Common myeloid progenitor, CD34-positive (primary cell): ENCODE measurements at regions of chr5 and their contacts with region 1.

Region 1: GRCh38 chr5:32709781-32710549 is 1.2 kb upstream of the NPR3 start:
- DNase-seq: peak; percentile 92 to 95 (median 95)
- H3K4me3 ChIP-seq: peak overlapping the region; percentile 78 to 98 (median 85)
- H3K27ac ChIP-seq: peak overlapping the region in 1 of 2 experiments; percentile 68
- H3K4me1 ChIP-seq: peaks cover 10 to 57% (median 28%) of the 10 kb centered on the region in 4 experiments
- H3K27me3 ChIP-seq: no peaks in the 10 kb centered on the region

Region 2: GRCh38 chr5:32677023-32677422 is 32.9 kb before region 1 on chr5:
- CTCF ChIA-PET with region 1: no interaction called
- POLR2A ChIA-PET with region 1: no interaction called
- DNase-seq: no peak
- H3K4me3 ChIP-seq: no peak overlapping the region
- H3K27ac ChIP-seq: no peak overlapping the region
- H3K4me1 ChIP-seq: peaks cover 0 to 6% (median 3%) of the 10 kb centered on the region in 4 experiments
- H3K27me3 ChIP-seq: no peaks in the 10 kb centered on the region

Region 3: DNA sequence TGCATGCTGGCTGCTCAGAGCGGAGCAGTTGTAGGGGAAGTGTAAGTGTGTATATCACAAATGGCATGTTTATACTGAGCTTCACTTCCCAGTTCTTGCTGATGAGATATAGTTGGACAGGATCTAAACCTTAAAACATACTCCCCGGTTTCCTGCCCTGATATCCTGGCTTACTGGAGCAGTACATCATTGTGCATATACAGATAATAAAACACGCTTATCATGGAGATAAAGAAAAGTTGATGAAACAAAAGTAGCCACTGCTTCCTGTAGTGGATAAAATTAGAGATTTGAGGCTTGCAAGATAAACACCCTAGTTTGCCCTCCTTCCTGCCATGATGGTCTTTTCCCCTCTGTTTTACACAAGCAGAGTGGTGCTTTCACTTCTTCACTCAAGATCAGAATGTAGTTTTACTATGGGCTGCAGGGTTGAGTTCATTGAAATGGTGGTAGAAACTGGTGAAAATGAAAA is 16.2 kb after region 1 on chr5:
- CTCF ChIA-PET with region 1: interaction called, 36 read pairs
- POLR2A ChIA-PET with region 1: interaction called, 3 read pairs
- DNase-seq: peak; percentile 45 to 85 (median 76)
- H3K4me3 ChIP-seq: peak overlapping the region in 5 of 7 experiments; percentile 8 to 61 (median 37)
- H3K27ac ChIP-seq: peak overlapping the region; percentile 20 to 63
- H3K4me1 ChIP-seq: peaks cover 27 to 76% (median 55%) of the 10 kb centered on the region in 4 experiments
- H3K27me3 ChIP-seq: no peaks in the 10 kb centered on the region

Region 4: DNA sequence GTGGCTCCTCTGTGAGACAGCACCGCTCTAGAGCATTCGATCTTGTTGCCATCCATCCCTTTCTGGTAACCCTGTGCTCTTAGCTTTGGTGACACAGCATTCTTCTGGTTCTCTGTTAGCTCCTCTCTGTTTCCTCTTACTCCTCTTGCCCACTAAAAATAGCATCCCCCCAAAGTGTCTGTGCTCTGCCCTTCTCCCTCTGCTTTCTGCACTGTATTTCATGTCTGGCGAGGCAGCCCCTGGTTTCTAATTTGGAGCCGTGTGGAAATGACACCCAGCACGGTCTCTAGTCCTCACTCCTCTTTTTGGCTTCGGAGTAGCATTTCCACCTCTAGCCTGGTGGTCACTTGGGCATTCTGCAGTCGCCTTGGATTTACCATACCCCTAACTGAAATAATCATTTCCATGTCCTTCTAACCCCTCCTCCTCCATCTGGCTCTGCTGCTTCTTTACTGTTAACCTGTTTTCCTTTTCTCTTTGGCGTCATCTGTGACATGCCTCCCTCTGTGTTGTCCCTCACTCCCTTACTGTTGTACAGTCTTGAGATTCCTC is 24.9 kb after region 1 on chr5:
- CTCF ChIA-PET with region 1: interaction called, 25 read pairs
- POLR2A ChIA-PET with region 1: interaction called, 5 read pairs
- DNase-seq: peak in 2 of 3 donors; percentile 64 to 77
- H3K4me3 ChIP-seq: peak overlapping the region in 5 of 7 experiments; percentile 20 to 62 (median 58)
- H3K27ac ChIP-seq: peak overlapping the region; percentile 30 to 65
- H3K4me1 ChIP-seq: peaks cover 34 to 70% (median 52%) of the 10 kb centered on the region in 4 experiments
- H3K27me3 ChIP-seq: no peaks in the 10 kb centered on the region

Region 5: DNA sequence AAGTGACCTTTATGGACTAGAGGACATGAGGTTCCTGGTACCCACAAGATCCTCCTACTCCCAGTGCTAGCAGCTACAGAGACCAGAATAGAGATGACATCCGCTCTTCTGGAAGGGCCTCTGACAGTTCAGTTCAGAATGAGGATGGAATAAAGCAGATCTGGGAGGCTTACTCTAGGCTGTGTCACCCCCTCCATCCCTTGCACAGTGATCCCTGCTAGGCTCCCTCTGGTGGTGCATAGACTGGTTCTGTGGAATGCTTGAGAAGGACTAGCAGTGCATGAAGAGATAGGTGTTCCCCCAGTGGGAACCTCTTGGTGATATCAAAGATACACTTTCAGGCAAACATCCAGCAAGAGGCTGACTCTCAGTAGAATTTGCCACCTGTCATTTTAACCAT is 84.1 kb after region 1 on chr5:
- CTCF ChIA-PET with region 1: interaction called, 13 read pairs
- POLR2A ChIA-PET with region 1: no interaction called
- DNase-seq: peak; percentile 31 to 59 (median 53)
- H3K4me3 ChIP-seq: no peak overlapping the region
- H3K27ac ChIP-seq: no peak overlapping the region
- H3K4me1 ChIP-seq: peaks cover 0 to 13% (median 3%) of the 10 kb centered on the region in 4 experiments
- H3K27me3 ChIP-seq: no peaks in the 10 kb centered on the region

Region 6: DNA sequence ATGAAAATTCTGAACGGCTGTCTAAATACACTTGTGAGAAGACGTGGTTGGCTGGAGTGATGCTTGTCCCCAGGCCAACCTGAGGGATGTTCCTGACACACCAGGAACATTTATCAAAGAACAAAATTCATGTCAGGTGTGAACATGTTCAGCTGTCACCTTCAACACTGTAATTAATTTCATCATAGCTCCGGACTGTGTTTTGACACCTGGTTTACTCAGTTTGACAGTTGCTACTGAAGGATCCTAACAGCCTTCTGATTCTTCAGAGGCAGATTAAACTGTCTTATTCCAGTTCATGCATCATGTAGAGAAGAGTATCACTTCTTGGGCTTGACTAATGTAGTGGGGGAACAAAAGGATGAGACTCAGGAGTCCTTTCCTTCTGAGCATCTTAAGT is 135.2 kb after region 1 on chr5:
- CTCF ChIA-PET with region 1: interaction called, 59 read pairs
- POLR2A ChIA-PET with region 1: no interaction called
- DNase-seq: no peak
- H3K4me3 ChIP-seq: no peak overlapping the region
- H3K27ac ChIP-seq: no peak overlapping the region
- H3K4me1 ChIP-seq: peaks cover 15 to 81% (median 36%) of the 10 kb centered on the region in 4 experiments
- H3K27me3 ChIP-seq: no peaks in the 10 kb centered on the region

Region 7: DNA sequence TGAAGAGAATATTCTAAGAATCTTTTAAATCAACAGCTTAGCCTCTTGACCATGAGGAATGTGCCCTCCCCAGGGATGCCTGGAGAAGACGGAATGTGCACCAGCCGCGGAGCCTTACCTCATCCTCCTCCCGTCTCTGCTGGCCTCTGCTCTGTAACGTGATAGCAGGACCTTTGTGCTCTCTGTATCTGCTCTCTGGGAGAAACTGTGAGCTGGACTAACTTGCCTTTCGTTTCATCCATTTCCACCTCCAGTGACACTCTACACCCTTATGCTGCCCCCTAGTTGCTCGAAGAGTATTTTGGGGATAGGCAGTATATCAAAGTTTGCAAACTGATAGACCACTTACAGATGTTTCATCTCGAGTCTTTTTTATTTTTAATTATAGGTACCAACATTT is 142.6 kb after region 1 on chr5:
- CTCF ChIA-PET with region 1: interaction called, 59 read pairs
- POLR2A ChIA-PET with region 1: no interaction called
- DNase-seq: peak; percentile 64 to 77 (median 75)
- H3K4me3 ChIP-seq: peak overlapping the region in 4 of 7 experiments; percentile 25 to 68 (median 38)
- H3K27ac ChIP-seq: no peak overlapping the region
- H3K4me1 ChIP-seq: peaks cover 0 to 25% (median 6%) of the 10 kb centered on the region in 4 experiments
- H3K27me3 ChIP-seq: no peaks in the 10 kb centered on the region

Region 8: DNA sequence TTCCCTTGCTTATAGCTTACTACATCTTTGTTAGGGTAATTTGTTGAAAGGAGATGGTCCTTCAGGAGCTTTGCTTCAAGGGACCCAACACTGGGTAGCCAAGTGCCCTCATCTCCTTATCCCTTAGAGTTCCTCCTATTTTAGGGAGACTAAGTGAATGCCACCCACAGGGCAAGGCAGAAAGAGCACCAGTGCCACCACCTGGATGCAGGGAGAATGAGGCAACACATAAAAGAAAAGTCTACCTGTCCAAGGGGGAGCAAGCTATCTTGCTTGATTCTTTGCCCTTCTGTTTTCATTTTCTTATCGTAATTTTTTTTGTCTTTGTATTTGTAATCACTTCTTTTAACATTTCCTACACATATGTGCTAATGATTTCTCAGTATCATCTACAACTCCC is 206.7 kb after region 1 on chr5:
- CTCF ChIA-PET with region 1: interaction called, 10 read pairs
- POLR2A ChIA-PET with region 1: interaction called, 3 read pairs
- DNase-seq: peak; percentile 49 to 64 (median 55)
- H3K4me3 ChIP-seq: no peak overlapping the region
- H3K27ac ChIP-seq: no peak overlapping the region
- H3K4me1 ChIP-seq: no peaks in the 10 kb centered on the region
- H3K27me3 ChIP-seq: no peaks in the 10 kb centered on the region